ENCODE measurements at regions of chr6 and their contacts with region 1.

Region 1: DNA sequence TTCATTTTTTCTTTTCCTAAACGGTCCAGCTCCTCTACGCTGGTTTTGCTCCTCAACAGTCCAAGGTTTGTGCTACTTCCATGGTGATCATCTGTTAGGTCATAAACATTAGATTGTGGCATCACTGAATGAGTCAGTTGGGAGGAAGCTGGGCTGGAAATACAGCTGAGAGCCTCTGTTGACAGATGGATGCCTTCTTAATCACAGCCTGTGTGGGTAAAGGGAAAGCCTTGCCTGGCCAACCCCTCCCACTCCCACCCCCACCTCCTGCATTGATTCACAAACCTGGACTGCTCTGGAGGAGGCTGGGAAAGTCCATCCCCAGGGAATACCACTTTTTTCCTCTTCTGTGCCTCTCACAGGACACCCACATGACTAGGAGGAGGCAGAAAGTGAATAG is 180.6 kb upstream of the CCN2 start:
- DNase-seq: peak; percentile 59
- ATAC-seq: peak; percentile 70 to 95

Region 2: GRCh38 chr6:131909408-131910218 is 222.1 kb before region 1 on chr6:
- intact Hi-C with region 1: no loop called
- DNase-seq: peak; percentile 63
- ATAC-seq: peak; percentile 77 to 79

Region 3: GRCh38 chr6:132070356-132070755 is 61.4 kb before region 1 on chr6:
- intact Hi-C with region 1: loop called in 1 of 2 experiments (anchors 5 kb)
- DNase-seq: no peak
- ATAC-seq: no peak

Region 4: DNA sequence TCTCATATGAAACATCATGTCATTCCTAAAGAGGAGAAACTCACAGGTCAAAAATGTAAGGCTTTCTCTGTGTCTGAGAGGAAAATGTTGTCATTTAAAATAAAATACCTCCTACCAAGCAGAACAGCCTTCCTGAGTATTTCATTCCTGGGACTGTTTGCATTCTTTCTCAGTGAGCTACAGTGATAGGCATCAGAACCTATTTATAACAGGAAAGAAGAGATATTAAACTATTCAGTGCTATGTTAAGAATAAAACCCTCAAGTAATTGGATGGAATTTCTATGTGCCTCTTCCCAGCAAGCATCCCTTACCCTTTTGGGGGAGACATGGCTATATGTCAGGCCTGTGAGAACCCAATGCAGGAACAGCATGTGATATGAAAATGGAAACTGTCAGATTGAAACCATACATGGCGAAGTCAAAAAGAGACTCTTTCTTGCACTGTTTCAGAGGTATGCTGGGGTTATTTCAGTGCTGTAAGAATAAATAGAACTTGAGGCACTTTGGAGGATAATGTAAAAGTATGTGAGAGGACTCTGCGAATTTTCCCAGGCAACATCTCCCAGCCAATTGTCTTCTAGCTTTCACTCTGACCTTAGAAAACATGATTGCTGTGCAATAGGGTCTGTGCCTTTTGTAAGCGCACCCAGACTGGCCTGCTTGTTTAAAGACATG is 46.8 kb before region 1 on chr6:
- intact Hi-C with region 1: loop called in 1 of 2 experiments (anchors 5 kb)
- DNase-seq: no peak
- ATAC-seq: peak; percentile 68 to 78

Region 5: DNA sequence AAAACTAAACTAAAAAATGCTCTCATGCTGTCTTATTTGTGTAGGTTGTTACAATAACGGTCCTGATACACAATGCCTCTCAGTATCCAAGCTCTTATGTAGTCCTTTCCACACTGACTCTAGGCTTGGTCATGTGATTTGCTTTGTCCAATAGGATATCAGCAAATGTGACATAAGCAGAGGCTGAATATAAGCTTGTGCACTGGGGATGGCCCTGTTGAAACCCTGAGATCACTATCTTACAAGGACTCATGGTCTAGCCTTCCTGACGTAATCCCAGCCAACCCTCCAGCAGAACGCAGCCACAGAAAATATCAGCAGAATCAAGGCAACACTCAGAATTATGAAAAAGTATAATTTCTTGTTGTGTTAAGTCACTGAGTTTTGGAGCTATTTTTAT is 35.5 kb before region 1 on chr6:
- intact Hi-C with region 1: no loop called
- DNase-seq: no peak
- ATAC-seq: no peak

Region 6: GRCh38 chr6:132202574-132202973 is 70.8 kb after region 1 on chr6:
- intact Hi-C with region 1: no loop called
- DNase-seq: no peak
- ATAC-seq: peak; percentile 44 to 91